Activated CD4-positive, alpha-beta memory T cell treated with anti-CD3 and anti-CD28 coated beads for 36 hours (primary cell): ENCODE measurements at regions of chrX and their contacts with region 1.

Region 1: GRCh38 chrX:48801280-48802088 is at the start of gene HDAC6:
- DNase-seq: peak; percentile 97
- H3K4me3 Mint-ChIP-seq: peak within 1 kb of the TSS; percentile 95
- H3K27ac Mint-ChIP-seq: peak within 1 kb of the TSS; percentile 99
- H3K4me1 Mint-ChIP-seq: peaks cover 16% of the 10 kb centered on the region
- H3K27me3 Mint-ChIP-seq: no peaks in the 10 kb centered on the region
- total RNA-seq, gene HDAC6: 71.8 to 81.9 TPM

Region 2: DNA sequence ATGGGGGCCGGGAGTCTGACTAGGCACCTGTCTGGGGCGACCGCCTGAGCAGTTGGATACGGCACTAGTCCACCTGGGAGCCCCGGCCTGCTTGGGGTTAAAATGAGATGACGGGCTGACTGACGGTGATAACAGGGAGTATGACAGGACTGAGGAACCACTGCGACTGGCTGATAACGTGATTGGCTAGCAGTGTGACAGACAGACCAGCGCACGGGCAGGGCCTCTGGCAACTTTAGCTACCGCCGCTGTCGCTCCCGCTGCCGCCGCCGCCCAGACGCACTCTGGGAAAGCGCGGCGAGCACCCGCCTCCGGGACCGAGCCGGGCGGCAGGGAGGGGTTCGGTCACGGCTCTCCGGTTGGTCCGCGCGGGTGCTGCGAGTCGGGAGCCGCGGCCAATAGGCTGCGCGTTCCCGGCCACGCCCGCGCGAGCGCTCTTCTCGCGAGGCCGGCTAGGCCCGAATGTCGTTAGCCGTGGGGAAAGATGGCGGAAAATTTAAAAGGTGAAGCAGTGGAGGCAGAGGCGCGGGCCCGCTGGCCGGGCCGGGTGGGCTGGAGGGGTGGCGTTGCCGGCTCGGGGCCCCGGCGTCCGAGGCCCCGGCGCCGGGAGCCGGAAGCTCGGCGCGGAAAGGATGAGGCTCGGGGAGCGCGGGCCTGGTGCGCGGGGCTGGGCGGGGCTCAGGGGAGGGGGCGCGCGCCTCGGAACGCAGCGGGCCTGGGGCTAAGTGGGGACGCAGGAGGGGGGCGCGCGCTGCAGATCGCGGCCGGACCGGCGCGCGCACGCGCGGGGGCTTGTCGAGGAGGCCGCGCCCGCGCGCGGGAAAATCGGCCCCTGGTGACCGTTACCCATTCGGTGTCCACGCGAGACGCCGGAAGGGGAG is 104.9 kb before region 1 on chrX and contains the start of gene SUV39H1:
- CTCF ChIA-PET with region 1: no interaction called
- POLR2A ChIA-PET with region 1: interaction called, 3 read pairs
- intact Hi-C with region 1: loop called (anchors 1 kb)
- DNase-seq: peak; percentile 91
- H3K4me3 Mint-ChIP-seq: peak within 1 kb of the TSS; percentile 87
- H3K27ac Mint-ChIP-seq: peak within 1 kb of the TSS; percentile 92
- H3K4me1 Mint-ChIP-seq: peaks cover 26% of the 10 kb centered on the region
- H3K27me3 Mint-ChIP-seq: no peaks in the 10 kb centered on the region
- total RNA-seq, gene SUV39H1: 32.3 to 35.6 TPM

Region 3: DNA sequence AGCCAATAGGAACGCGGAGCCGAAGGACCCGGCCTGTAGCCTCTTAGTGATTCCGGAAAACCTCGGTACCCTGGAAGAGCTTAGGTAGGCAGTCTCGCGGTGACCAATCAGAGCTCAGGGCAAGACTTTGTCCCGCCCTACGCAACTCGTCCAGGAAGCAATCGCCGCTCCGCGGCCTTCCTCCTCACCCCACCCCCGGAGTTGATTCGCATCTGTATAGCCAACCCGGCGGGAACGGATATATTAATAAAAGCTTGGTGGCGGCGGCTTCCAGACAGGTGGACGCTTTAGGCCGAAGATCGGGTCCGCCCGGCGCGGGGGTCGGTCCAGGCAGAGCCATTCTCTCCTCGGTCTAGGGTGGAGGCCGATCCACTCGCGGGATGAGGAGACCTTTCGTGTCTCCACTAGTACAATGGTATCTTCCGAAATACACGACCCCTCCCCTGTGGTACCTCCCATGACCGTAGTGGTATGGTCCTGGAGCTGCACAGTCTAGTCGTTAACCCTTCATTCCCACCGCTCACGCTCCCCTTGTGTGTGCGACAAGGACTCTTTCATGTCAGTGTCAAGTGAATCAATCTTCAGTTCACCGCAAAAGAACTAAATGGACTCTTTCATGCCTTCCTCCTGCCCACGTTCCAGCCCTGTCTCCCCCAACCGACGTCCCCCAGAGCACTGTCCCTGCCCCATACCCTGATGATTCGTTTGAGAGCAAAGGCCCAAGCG is 64.1 kb before region 1 on chrX:
- CTCF ChIA-PET with region 1: no interaction called
- POLR2A ChIA-PET with region 1: interaction called, 3 read pairs
- intact Hi-C with region 1: loop called (anchors 5 kb)
- DNase-seq: peak; percentile 93
- H3K4me3 Mint-ChIP-seq: peak overlapping the region; percentile 95
- H3K27ac Mint-ChIP-seq: peak overlapping the region; percentile 97
- H3K4me1 Mint-ChIP-seq: peaks cover 19% of the 10 kb centered on the region
- H3K27me3 Mint-ChIP-seq: no peaks in the 10 kb centered on the region

Region 4: DNA sequence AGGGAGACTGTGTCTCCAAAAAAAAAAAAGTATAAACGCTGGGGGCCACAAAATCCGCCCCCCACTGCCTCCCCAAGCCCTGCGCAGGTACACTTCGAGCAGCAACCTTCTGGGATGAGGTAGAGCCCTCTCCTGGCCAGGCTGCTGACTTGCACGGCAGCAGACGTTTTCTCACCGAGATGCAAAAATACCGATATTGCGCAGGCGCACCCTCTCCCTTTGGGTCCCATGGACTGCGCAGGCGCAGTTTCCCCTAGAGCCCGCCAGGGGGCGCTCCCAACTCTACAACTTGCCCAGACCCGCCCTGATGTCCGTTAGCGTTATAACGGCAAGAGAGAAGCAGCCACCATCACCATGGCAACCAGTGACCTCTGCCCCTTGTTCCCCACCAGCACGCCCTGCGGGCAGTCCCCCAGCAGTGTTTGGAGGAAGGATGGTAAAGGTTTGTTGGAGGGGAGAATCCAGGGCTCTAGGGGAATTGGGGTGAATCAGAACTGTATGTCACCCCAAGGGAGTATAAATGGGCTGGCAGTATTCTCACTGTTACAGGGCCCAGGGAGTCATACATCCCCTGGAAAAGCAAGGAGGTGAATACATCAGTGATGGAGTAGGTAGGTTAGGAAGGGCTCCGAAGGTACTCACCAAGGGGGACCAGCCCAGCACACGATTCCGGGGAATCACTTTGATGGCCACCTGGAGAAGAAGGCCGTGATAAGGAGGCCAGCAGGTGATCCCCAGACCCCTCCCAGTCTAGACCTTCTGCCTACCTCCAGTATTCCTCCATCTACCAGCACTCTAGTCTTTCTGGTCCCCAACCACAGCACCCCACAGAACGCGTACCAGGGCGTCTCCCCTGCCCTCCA is 115.9 kb after region 1 on chrX:
- CTCF ChIA-PET with region 1: no interaction called
- POLR2A ChIA-PET with region 1: no interaction called
- intact Hi-C with region 1: loop called (anchors 5 kb)
- DNase-seq: peak; percentile 93
- H3K4me3 Mint-ChIP-seq: peak overlapping the region; percentile 98
- H3K27ac Mint-ChIP-seq: peak overlapping the region; percentile 99
- H3K4me1 Mint-ChIP-seq: peaks cover 36% of the 10 kb centered on the region
- H3K27me3 Mint-ChIP-seq: peaks cover 4% of the 10 kb centered on the region

Region 5: DNA sequence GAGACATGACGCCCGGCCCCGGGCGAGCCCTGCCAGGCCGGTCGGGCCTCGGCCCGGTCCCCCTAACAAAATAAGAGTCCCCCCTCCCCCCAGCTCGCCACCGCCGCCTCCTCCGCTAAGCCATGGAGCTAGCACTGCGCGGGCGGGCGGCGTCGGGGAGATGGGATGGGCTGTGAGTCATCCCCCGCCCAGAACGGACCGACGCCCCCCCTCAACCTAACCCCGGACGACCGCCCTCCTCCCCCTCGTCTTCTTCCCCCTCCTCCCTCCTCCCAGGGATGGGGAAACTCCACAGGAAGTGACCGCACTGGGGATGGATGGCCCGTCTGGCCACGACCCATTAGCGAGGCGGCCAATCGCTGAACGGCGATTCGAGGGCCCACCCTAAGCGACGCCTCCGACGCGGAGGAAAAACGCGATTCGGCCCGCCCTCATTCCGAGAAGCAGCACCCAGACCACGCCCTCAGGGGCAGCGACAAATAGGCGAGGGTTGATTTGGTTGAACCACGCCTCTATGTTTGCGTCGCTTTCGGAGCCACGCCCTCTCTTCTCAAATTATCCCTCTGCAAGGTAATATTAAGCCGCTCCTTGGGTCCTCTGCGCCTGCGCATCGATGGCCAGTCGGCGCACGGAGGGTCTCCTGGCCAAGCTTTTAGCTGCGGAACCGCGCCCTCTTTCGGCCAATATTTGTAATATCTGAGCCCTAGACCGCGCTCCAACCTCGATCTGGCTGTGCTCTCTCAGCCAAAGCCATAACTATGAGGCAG is 241.9 kb after region 1 on chrX and contains the start of gene TFE3:
- CTCF ChIA-PET with region 1: no interaction called
- POLR2A ChIA-PET with region 1: no interaction called
- intact Hi-C with region 1: loop called (anchors 2 kb)
- DNase-seq: peak; percentile 97
- H3K4me3 Mint-ChIP-seq: peak within 1 kb of the TSS; percentile 91
- H3K27ac Mint-ChIP-seq: peak within 1 kb of the TSS; percentile 92
- H3K4me1 Mint-ChIP-seq: peaks cover 30% of the 10 kb centered on the region
- H3K27me3 Mint-ChIP-seq: no peaks in the 10 kb centered on the region
- total RNA-seq, gene TFE3: 29.0 to 29.1 TPM